Endothelial cell of umbilical vein (primary cell): ENCODE measurements at regions of chr7 and their contacts with region 1.

Region 1: DNA sequence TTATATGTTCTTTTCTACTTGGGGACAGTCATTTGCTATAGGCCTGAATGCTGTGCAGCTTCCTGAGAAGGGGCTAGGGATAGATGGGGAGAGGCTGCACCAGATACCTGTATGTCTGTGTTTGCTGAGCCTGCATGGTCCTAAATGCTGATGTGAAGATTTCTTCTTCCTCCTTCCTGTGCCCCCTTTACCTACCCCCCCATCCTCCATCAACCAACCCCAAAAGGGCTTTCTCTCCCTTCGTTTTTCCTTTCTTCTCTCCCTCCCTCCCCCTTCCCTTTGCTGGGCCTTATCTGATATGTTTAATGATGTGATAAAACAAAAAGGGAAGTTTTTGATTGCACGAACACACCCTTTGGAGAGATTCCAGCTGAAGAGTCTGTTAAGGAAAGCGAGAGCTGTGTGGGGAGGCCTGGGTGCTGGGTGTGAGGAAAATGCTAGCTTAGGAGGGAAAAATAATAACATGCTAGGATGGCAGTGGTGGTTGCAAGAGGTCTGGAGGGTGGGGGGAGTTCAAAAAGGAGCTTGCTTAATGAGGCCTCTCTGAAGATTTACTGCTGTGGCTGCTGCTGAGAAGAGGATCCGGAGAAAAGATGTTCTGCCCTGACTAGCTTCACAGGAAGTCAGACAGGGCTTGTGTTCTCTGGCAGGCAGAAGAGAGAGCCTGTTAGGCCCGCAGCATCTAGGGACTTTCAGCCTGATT is 101.8 kb downstream of the SAMD9 start:
- DNase-seq: peak; percentile 57
- H3K4me3 ChIP-seq: no peak overlapping the region
- H3K27ac ChIP-seq: peak overlapping the region; percentile 89
- H3K4me1 ChIP-seq: peaks cover 54% of the 10 kb centered on the region
- H3K27me3 ChIP-seq: no peaks in the 10 kb centered on the region
- CTCF ChIP-seq: no peak
- POLR2A ChIP-seq: no peak

Region 2: GRCh38 chr7:92528188-92528957 is 487.6 kb before region 1 on chr7 and contains the starts of genes PEX1 and RBM48:
- CTCF ChIA-PET with region 1: interaction called, 3 read pairs
- POLR2A ChIA-PET with region 1: no interaction called
- dilution Hi-C with region 1: no loop called
- intact Hi-C with region 1: loop called (anchors 1 kb)
- DNase-seq: peak; percentile 100
- H3K4me3 ChIP-seq: peak within 1 kb of the TSS; percentile 88 to 100 (median 95)
- H3K27ac ChIP-seq: peak within 1 kb of the TSS; percentile 91
- H3K4me1 ChIP-seq: peaks cover 15% of the 10 kb centered on the region
- H3K27me3 ChIP-seq: no peaks in the 10 kb centered on the region
- CTCF ChIP-seq: peak; percentile 34 to 50
- POLR2A ChIP-seq: peak; percentile 70
- total RNA-seq, gene PEX1: 10.7 and 11.7 TPM in 2 replicates
- total RNA-seq, gene RBM48: 12.0 and 13.1 TPM in 2 replicates

Region 3: DNA sequence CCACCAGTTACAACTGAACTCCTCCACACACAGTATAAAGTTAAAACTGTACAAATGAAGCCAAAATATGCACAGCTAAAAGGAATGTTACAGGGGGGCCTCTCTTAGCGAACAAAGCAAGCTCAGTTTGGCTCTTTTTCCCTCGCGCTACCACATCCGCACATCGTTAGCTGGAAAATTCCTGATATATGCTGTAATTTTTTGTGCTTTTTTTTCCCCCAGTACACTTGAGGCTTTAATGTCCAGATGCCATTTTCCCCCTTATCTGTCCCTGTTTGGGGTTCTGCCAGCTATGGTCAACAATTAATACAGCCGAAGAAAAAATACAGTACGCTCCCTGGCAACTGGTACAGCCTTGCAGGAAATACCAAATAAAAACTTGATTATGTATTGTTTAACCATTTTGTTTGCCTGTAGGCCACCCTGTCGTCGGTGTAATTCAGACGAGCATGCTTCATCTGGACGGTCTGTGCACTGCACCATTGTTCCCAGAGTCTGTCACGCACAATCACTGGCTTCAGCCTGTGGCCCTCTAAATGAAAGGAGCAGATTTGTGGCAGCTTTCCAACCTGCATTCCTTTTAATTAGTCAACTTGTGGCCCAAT is 317.6 kb before region 1 on chr7:
- CTCF ChIA-PET with region 1: interaction called, 3 read pairs
- POLR2A ChIA-PET with region 1: no interaction called
- dilution Hi-C with region 1: no loop called
- intact Hi-C with region 1: loop called (anchors 1 kb)
- DNase-seq: peak; percentile 95
- H3K4me3 ChIP-seq: peak overlapping the region in 1 of 3 experiments; percentile 1
- H3K27ac ChIP-seq: peak overlapping the region; percentile 75
- H3K4me1 ChIP-seq: peaks cover 44% of the 10 kb centered on the region
- H3K27me3 ChIP-seq: no peaks in the 10 kb centered on the region
- CTCF ChIP-seq: no peak
- POLR2A ChIP-seq: peak; percentile 35

Region 4: GRCh38 chr7:92880212-92881090 is 135.5 kb before region 1 on chr7:
- CTCF ChIA-PET with region 1: no interaction called
- POLR2A ChIA-PET with region 1: no interaction called
- dilution Hi-C with region 1: no loop called
- intact Hi-C with region 1: loop called (anchors 2 kb)
- DNase-seq: peak; percentile 20
- H3K4me3 ChIP-seq: no peak overlapping the region
- H3K27ac ChIP-seq: no peak overlapping the region
- H3K4me1 ChIP-seq: no peaks in the 10 kb centered on the region
- H3K27me3 ChIP-seq: no peaks in the 10 kb centered on the region
- CTCF ChIP-seq: peak in 1 of 2 donors; percentile 16
- POLR2A ChIP-seq: no peak

Region 5: DNA sequence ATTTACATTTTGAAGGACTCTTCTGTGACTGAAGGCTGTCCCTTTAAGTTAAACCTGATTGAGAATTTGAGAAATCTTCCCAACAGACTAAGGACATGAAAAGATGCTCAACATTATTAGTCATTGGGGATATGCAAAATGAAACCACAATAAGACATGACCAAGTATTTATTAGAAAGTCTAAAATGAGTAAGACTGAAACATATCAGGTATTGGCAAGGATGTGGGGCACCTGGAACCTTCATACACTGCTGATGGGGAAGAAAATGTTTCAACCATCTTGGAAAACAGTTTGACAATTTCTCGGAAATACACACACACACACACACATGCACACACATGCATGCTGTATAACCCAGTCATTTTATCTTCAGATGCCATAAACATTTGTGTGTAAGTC is 47.4 kb before region 1 on chr7:
- CTCF ChIA-PET with region 1: no interaction called
- POLR2A ChIA-PET with region 1: no interaction called
- dilution Hi-C with region 1: no loop called
- intact Hi-C with region 1: no loop called
- DNase-seq: no peak
- H3K4me3 ChIP-seq: no peak overlapping the region
- H3K27ac ChIP-seq: no peak overlapping the region
- H3K4me1 ChIP-seq: no peaks in the 10 kb centered on the region
- H3K27me3 ChIP-seq: peaks cover 2% of the 10 kb centered on the region in 2 experiments
- CTCF ChIP-seq: no peak
- POLR2A ChIP-seq: no peak

Region 6: DNA sequence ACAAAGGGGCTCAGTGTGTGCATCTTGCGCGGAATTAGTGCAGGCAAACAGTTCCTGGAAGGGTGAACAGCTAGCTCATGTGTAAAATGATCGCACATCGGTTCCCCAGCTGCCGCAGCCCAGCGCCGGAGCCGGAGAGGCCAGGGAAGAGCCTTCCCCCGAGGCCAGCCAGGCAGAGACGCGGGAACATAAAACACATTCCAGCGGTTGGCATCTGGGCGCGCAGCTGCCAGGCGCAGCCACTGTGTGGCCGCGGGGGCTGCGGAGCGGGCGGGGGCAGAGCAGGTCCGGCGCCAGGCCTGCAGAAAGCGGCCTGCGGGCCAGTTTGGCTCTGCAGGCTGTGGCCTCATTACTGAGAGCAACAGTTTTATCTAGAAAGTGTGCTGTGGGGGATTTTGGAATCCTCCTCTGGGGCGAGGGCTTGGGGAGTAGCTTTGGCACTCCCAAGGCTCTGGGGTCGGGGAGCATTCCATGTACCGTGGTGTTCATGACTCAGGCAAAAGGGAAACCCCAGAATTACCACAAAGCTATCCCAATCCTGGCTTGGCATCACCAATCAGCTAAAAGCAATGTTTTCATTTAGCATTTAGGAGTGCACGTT is 27.6 kb after region 1 on chr7:
- CTCF ChIA-PET with region 1: interaction called, 12 read pairs
- POLR2A ChIA-PET with region 1: interaction called, 3 read pairs
- dilution Hi-C with region 1: no loop called
- intact Hi-C with region 1: loop called (anchors 2 kb)
- DNase-seq: peak; percentile 7
- H3K4me3 ChIP-seq: no peak overlapping the region
- H3K27ac ChIP-seq: no peak overlapping the region
- H3K4me1 ChIP-seq: peaks cover 15% of the 10 kb centered on the region
- H3K27me3 ChIP-seq: no peaks in the 10 kb centered on the region
- CTCF ChIP-seq: no peak
- POLR2A ChIP-seq: no peak

Region 7: DNA sequence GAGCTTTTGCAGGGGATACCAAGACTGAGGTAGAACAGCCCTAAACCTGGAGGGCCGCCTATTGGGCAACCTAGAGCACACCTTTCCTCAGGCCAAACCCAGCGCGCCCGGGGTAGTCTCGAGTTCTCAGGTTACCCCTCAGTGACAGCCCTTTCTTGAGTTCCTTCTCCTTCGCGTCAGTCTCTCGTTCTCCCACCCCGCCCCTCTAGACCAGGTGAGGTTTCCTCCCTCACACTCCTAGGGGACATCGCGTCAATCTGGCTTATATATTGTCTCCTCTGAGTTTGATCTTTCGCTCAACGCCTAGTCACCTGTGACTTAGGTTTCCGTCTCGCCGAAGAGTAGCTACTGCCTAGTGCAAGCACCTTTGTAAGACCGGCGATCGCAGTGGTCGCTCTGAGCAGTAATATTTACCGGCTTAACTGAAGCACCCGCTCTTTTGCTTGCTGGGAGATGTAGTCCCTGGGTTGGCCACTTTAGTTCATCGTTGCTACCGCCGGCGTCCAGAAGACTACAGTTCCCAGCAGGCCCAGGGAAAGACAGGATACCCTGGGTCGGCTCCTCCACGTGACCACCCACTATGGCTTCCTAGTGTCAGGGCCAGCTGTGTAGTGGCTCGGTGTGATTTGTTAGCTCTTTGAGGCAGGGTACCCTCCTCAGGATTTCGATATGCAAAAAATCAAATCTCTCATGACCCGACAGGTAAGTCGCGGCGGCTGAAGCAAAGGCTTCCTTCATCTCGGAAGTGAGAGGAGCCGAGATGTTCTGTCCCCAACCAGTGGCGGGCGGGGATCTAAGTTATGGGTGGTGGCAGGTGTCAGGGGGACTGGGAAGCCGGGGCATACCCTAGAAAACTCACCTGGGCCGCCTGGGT is 216.1 kb after region 1 on chr7 and contains the start of gene VPS50:
- CTCF ChIA-PET with region 1: no interaction called
- POLR2A ChIA-PET with region 1: no interaction called
- dilution Hi-C with region 1: no loop called
- intact Hi-C with region 1: loop called (anchors 5 kb)
- DNase-seq: peak; percentile 99
- H3K4me3 ChIP-seq: peak within 1 kb of the TSS; percentile 82 to 91 (median 90)
- H3K27ac ChIP-seq: peak within 1 kb of the TSS; percentile 16
- H3K4me1 ChIP-seq: peaks cover 14% of the 10 kb centered on the region
- H3K27me3 ChIP-seq: peaks cover 0 to 8% of the 10 kb centered on the region in 2 experiments
- CTCF ChIP-seq: no peak
- POLR2A ChIP-seq: peak; percentile 35
- total RNA-seq, gene VPS50: 23.9 and 25.6 TPM in 2 replicates